Posterior vena cava (tissue), 2 donors: ENCODE measurements at regions of chr15 and their contacts with region 1.

Region 1: GRCh38 chr15:41774062-41774881 is at the start of gene MAPKBP1:
- DNase-seq: peak; percentile 99
- total RNA-seq, gene MAPKBP1: 26.5 to 27.9 TPM

Region 2: GRCh38 chr15:41811432-41812195 is 37.3 kb after region 1 on chr15:
- intact Hi-C with region 1: loop called (anchors 1 to 5 kb)
- DNase-seq: peak; percentile 95

Region 3: DNA sequence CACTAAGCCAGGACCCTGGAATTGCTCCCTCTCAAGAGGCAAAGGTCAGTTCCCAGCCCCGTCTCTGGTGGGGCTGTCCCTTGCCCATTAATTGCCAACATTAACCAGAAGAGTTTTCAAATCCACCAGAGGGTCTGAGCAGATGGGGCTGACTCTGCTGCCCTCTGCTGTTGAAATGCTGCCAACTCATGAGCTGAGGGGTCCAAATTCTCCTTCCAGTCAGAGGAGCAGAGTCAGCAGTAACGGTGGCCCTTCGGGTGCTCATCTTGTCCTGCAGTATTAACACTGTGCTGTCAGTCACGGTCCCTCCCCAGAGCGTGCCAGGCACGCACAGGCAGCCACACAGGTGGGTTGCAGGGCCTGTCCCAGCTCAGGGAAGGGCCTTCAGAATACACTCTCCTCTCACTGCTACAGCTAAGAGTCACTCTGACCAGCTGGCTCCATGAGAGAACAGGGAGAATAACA is 130.3 kb after region 1 on chr15:
- intact Hi-C with region 1: loop called in 1 of 2 experiments (anchors 10 kb)
- DNase-seq: no peak

Region 4: GRCh38 chr15:42056934-42057779 is 282.9 kb after region 1 on chr15:
- intact Hi-C with region 1: loop called in 1 of 2 experiments (anchors 5 kb)
- DNase-seq: no peak